Endothelial cell of umbilical vein (primary cell): ENCODE measurements at regions of chr2 and their contacts with region 1.

Region 1: DNA sequence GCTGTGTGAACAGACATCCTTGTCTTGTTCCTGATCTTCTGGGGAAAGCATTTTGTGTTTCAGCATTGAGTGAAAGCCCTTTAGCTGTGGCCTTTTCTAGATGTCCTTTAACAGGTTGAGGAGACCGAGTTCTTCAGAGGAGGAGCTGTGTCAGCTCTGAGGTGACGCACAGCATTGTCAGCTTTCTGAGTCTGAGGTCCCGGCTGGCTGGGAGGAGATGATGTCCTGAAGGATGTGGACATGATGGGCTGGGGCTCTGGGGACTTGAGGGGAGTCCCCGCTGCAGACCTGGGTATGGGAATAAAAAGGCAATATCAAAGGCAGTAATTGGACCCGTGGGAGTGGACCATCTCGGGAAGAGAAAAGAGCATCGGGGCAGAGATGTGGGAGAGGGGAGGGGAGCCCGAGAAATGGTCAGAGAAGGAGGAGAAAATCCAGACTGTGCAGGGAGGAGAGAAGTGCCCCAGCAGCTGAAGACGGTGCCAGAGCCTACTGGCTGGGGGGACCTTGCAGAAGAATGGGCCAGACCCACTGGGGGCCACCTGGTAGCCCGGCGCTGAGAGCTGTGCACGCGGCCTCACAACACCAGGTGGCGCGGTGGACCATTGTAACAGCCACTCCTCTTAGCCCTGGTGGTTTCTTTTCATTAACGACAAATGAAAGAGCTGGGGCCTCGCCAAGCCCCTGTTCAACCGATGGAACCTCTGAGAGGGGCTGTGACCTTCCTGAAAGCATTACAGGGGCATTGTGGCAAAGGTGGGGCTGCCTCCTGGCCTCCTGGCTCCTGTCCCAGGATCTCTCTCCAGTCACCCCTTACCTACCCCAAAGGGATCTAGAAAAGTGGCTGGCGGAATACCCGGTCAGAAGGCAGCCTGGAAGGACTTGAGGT is 61.6 kb downstream of the ST3GAL5 start:
- DNase-seq: peak; percentile 61
- H3K4me3 ChIP-seq: no peak overlapping the region
- H3K27ac ChIP-seq: no peak overlapping the region
- H3K4me1 ChIP-seq: no peaks in the 10 kb centered on the region
- H3K27me3 ChIP-seq: peaks cover 0 to 2% of the 10 kb centered on the region in 2 experiments
- CTCF ChIP-seq: peak; percentile 71 to 92
- POLR2A ChIP-seq: no peak

Region 2: GRCh38 chr2:85728883-85729824 is 98.1 kb before region 1 on chr2:
- CTCF ChIA-PET with region 1: interaction called, 20 read pairs
- POLR2A ChIA-PET with region 1: interaction called, 3 read pairs
- dilution Hi-C with region 1: loop called (anchors 25 kb)
- intact Hi-C with region 1: no loop called
- DNase-seq: peak; percentile 76
- H3K4me3 ChIP-seq: no peak overlapping the region
- H3K27ac ChIP-seq: no peak overlapping the region
- H3K4me1 ChIP-seq: peaks cover 4% of the 10 kb centered on the region
- H3K27me3 ChIP-seq: peaks cover 0 to 3% of the 10 kb centered on the region in 2 experiments
- CTCF ChIP-seq: peak; percentile 97 to 99
- POLR2A ChIP-seq: no peak

Region 3: DNA sequence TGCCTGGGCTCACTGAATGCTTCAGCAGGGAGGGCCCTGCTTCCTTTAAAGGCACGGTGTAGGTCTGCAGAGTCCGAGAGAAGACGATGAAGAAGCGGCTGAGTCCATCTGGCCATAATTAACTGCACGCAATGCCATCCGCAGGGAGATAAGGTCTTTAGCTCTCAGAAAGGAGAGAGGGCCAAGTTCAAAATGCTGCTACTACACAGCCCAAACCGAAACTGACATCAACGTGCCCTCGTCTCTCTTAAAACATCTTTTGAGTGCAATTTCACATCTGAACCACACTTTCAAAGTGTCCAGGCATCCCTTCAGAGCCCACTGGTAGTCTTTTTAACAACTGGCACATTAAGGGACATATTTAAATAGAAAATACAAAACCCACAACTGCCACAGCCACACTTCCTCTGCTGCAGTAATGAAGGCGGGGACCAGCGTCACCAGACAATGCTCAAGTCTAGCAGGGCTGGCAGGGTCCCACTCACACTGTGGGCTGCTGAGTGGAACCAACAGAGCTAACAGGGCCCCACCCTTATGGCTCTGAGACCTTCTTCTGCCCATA is 25.8 kb after region 1 on chr2:
- CTCF ChIA-PET with region 1: interaction called, 13 read pairs
- POLR2A ChIA-PET with region 1: no interaction called
- dilution Hi-C with region 1: no loop called
- intact Hi-C with region 1: no loop called
- DNase-seq: no peak
- H3K4me3 ChIP-seq: no peak overlapping the region
- H3K27ac ChIP-seq: no peak overlapping the region
- H3K4me1 ChIP-seq: peaks cover 11% of the 10 kb centered on the region
- H3K27me3 ChIP-seq: no peaks in the 10 kb centered on the region
- CTCF ChIP-seq: no peak
- POLR2A ChIP-seq: no peak

Region 4: DNA sequence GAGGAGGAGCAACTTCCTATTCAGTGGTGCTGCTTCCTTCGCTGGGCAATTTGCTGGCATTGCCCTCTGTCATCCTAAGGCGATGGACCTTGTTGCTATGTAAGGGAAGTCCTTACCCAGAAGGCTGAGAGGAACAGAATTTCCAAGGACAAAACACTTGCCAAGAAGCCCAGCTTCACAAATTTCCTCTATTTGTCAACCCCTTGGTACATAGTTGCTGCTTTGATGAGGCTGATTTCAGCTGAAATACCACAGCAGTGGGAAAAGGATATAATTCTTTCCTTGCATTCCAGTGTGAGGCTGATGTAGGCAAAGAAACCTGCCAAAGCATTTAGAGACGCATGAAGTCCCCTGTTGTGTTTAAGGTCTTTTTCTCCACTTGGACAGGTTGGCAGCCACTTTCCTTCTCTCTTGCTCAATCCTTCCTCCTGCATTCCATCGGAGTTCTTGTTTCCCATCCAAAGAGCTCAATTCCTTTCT is 78.0 kb after region 1 on chr2:
- CTCF ChIA-PET with region 1: interaction called, 10 read pairs
- POLR2A ChIA-PET with region 1: no interaction called
- dilution Hi-C with region 1: no loop called
- intact Hi-C with region 1: no loop called
- DNase-seq: peak; percentile 21
- H3K4me3 ChIP-seq: no peak overlapping the region
- H3K27ac ChIP-seq: no peak overlapping the region
- H3K4me1 ChIP-seq: no peaks in the 10 kb centered on the region
- H3K27me3 ChIP-seq: peaks cover 7 to 8% of the 10 kb centered on the region in 2 experiments
- CTCF ChIP-seq: no peak
- POLR2A ChIP-seq: no peak

Region 5: DNA sequence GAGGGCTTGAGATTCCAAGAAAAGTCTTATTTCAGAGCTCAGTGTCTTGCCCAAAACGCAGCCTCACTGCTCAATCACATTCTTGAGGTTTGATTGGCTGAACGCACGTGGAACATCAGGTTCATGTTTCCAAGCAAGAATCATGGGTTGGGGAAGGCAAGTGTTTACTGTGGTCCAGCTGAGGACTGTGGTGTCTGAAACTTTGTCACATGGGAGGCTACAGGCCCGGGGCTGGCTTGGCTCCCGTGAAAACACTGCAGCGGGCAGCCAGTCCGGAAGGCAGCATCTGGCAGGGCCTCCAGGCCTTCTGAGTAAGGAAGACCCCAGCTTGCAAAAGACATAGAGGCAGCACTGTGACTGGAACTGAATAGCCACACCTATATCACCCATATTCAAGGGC is 193.8 kb after region 1 on chr2:
- CTCF ChIA-PET with region 1: interaction called, 11 read pairs
- POLR2A ChIA-PET with region 1: no interaction called
- dilution Hi-C with region 1: no loop called
- intact Hi-C with region 1: no loop called
- DNase-seq: peak; percentile 87
- H3K4me3 ChIP-seq: no peak overlapping the region
- H3K27ac ChIP-seq: no peak overlapping the region
- H3K4me1 ChIP-seq: peaks cover 15% of the 10 kb centered on the region
- H3K27me3 ChIP-seq: no peaks in the 10 kb centered on the region
- CTCF ChIP-seq: no peak
- POLR2A ChIP-seq: no peak

Region 6: GRCh38 chr2:86048888-86049287 is 221.7 kb after region 1 on chr2:
- CTCF ChIA-PET with region 1: interaction called, 19 read pairs
- POLR2A ChIA-PET with region 1: no interaction called
- dilution Hi-C with region 1: no loop called
- intact Hi-C with region 1: no loop called
- DNase-seq: no peak
- H3K4me3 ChIP-seq: no peak overlapping the region
- H3K27ac ChIP-seq: no peak overlapping the region
- H3K4me1 ChIP-seq: peaks cover 9% of the 10 kb centered on the region
- H3K27me3 ChIP-seq: no peaks in the 10 kb centered on the region
- CTCF ChIP-seq: no peak
- POLR2A ChIP-seq: no peak

Region 7: GRCh38 chr2:86105252-86105968 is 278.2 kb after region 1 on chr2 and contains the start of gene POLR1A:
- CTCF ChIA-PET with region 1: interaction called, 10 read pairs
- POLR2A ChIA-PET with region 1: interaction called, 3 read pairs
- dilution Hi-C with region 1: no loop called
- intact Hi-C with region 1: no loop called
- DNase-seq: peak; percentile 97
- H3K4me3 ChIP-seq: peak within 1 kb of the TSS; percentile 36 to 84 (median 77)
- H3K27ac ChIP-seq: peak within 1 kb of the TSS; percentile 78
- H3K4me1 ChIP-seq: peaks cover 23% of the 10 kb centered on the region
- H3K27me3 ChIP-seq: no peaks in the 10 kb centered on the region
- CTCF ChIP-seq: no peak
- POLR2A ChIP-seq: no peak
- total RNA-seq, gene POLR1A: 40.7 and 46.0 TPM in 2 replicates